Activated naive CD4-positive, alpha-beta T cell treated with anti-CD3 and anti-CD28 coated beads for 36 hours (primary cell): ENCODE measurements at regions of chr2 and their contacts with region 1.

Region 1: DNA sequence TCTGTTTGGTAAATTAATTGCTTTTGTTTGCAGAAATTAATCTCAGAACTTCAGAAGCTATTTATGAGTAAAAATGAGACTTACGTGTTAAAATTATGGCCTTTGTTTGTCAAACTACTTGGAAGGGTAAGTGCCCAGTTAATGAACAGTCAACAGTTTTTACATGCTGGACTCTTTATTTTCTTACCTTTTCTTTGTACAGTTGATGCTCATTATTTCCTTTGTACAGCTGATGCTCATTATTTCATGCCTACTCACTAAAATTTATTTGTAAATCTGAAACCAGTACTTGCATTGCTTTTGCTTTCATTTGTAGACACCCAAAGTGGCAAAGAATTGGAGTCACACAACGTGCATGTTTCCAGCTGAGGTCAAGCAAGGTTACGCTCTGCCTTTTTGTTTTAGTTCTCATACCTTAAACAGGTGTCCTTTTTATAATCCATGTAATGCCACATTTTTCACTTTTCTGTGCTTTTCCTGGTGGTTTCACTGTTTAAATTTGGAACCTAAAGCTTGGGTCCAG is 13.3 kb downstream of the RIF1 start:
- DNase-seq: peak; percentile 21
- H3K4me3 Mint-ChIP-seq: no peak overlapping the region
- H3K27ac Mint-ChIP-seq: peak overlapping the region; percentile 77
- H3K4me1 Mint-ChIP-seq: peaks cover 37% of the 10 kb centered on the region
- H3K27me3 Mint-ChIP-seq: no peaks in the 10 kb centered on the region

Region 2: GRCh38 chr2:150188177-150188576 is 1234.8 kb before region 1 on chr2:
- CTCF ChIA-PET with region 1: no interaction called
- intact Hi-C with region 1: no loop called
- DNase-seq: no peak
- H3K4me3 Mint-ChIP-seq: no peak overlapping the region
- H3K27ac Mint-ChIP-seq: no peak overlapping the region
- H3K4me1 Mint-ChIP-seq: no peaks in the 10 kb centered on the region
- H3K27me3 Mint-ChIP-seq: no peaks in the 10 kb centered on the region

Region 3: DNA sequence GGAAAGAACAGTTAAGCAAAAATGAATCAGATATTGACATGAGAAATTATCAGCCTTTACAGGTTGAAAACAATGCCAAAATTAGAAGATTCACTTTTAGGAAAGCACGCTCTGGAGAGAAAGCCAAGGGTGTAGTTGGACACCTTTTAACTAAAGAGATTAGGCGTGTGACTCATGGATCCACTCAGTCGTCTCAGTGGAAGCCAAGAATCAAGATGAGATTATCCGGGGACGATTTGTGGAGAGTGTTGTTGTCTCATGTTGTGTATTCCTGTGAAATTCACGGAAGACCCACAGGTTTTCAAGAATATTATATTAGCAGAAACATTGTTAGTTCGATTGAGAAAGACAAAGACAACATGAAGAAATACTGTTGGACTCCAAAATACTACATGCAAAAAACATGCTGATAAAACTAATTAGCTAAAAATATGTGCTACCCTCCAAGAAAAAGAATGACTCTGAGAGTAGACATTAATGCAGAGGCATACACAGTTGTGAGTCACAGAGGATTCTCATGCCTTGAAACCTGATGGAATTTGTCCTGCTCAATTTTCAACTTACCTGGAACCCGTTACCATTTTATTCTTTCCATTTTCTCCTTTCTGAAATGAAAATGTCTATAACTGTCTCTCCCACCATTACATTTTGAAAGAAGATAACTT is 743.4 kb before region 1 on chr2:
- CTCF ChIA-PET with region 1: no interaction called
- intact Hi-C with region 1: no loop called
- DNase-seq: no peak
- H3K4me3 Mint-ChIP-seq: no peak overlapping the region
- H3K27ac Mint-ChIP-seq: no peak overlapping the region
- H3K4me1 Mint-ChIP-seq: no peaks in the 10 kb centered on the region
- H3K27me3 Mint-ChIP-seq: no peaks in the 10 kb centered on the region

Region 4: GRCh38 chr2:151261231-151261976 is 161.6 kb before region 1 on chr2 and contains the start of gene RBM43:
- CTCF ChIA-PET with region 1: interaction called, 6 read pairs
- intact Hi-C with region 1: loop called (anchors 1 kb)
- DNase-seq: peak; percentile 81
- H3K4me3 Mint-ChIP-seq: peak within 1 kb of the TSS; percentile 87
- H3K27ac Mint-ChIP-seq: peak within 1 kb of the TSS; percentile 87
- H3K4me1 Mint-ChIP-seq: peaks cover 18% of the 10 kb centered on the region
- H3K27me3 Mint-ChIP-seq: no peaks in the 10 kb centered on the region
- total RNA-seq, gene RBM43: 3.4 to 3.8 TPM

Region 5: DNA sequence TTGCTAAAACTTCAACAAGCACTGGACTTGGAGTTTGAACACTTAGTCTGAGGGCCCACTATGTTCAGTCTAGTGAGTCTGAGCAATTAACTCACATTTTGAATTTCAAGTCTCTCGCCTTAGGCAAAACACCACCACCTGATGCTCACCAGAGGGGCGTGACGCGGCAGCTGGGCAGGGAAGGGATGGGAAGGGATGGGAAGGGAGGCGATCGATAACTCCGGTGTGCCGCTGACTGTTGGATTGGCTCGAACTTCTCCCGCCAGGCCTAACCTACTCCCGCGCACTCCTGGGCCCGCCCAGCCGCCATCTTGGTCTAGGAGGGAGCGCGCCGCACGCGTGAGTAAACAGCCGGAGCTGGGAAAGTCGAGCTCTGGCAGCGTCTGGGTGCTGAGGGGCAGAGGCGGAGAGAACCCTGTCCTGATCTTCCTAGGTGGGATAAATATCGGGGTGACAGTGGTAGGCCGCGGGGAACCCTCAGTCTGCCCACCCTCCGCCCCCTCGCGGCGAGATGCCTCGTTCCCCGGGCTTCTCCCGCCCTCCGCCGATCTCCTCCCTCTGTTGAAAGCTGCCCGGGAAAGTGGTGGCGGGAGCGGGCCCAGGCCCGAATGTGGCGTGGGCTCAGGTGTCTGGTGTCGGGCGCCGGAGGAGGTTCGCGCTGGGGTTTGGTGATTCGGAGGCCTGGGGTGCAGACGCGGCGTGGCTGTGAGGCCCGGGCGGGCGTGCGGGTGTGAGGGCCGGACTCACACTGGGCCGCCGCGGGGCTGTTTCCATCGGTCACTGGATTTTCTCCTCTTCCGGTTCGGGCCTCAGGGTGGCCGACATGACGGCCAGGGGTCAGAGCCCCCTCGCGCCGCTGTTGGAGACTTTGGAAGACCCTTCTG is 13.1 kb before region 1 on chr2 and contains the start of gene RIF1:
- CTCF ChIA-PET with region 1: interaction called, 3 read pairs
- intact Hi-C with region 1: loop called (anchors 1 kb)
- DNase-seq: peak; percentile 88
- H3K4me3 Mint-ChIP-seq: peak within 1 kb of the TSS; percentile 100
- H3K27ac Mint-ChIP-seq: peak within 1 kb of the TSS; percentile 95
- H3K4me1 Mint-ChIP-seq: peaks cover 18% of the 10 kb centered on the region
- H3K27me3 Mint-ChIP-seq: no peaks in the 10 kb centered on the region
- total RNA-seq, gene RIF1: 53.0 TPM

Region 6: DNA sequence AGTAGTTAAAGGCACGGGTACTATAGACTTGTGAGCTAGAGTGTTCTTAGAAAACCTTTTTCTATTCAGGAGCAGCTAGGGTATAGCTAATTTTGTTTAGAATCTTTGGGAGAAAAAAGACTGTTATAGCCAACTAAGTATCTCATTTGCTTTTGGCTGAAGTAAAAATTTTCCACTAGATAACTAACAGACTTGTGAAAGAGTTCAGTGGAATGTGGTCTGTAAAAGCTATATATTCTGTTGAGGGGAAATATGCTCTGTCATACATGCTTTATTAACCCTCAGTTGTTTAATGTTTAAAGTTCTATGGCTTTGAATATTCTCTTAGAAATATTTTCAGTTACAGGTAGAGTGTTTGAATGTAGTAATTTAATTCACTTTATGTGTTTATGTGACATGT is 36.4 kb after region 1 on chr2:
- CTCF ChIA-PET with region 1: no interaction called
- intact Hi-C with region 1: loop called (anchors 5 kb)
- DNase-seq: no peak
- H3K4me3 Mint-ChIP-seq: no peak overlapping the region
- H3K27ac Mint-ChIP-seq: no peak overlapping the region
- H3K4me1 Mint-ChIP-seq: no peaks in the 10 kb centered on the region
- H3K27me3 Mint-ChIP-seq: no peaks in the 10 kb centered on the region

Region 7: GRCh38 chr2:151481744-151482143 is 58.8 kb after region 1 on chr2:
- CTCF ChIA-PET with region 1: no interaction called
- intact Hi-C with region 1: no loop called
- DNase-seq: peak; percentile 57
- H3K4me3 Mint-ChIP-seq: no peak overlapping the region
- H3K27ac Mint-ChIP-seq: peak overlapping the region; percentile 58
- H3K4me1 Mint-ChIP-seq: peaks cover 31% of the 10 kb centered on the region
- H3K27me3 Mint-ChIP-seq: no peaks in the 10 kb centered on the region

Region 8: GRCh38 chr2:151922845-151923666 is 500.1 kb after region 1 on chr2:
- CTCF ChIA-PET with region 1: no interaction called
- intact Hi-C with region 1: no loop called
- DNase-seq: no peak
- H3K4me3 Mint-ChIP-seq: no peak overlapping the region
- H3K27ac Mint-ChIP-seq: no peak overlapping the region
- H3K4me1 Mint-ChIP-seq: no peaks in the 10 kb centered on the region
- H3K27me3 Mint-ChIP-seq: no peaks in the 10 kb centered on the region